ENCODE measurements at regions of chr1 and their contacts with region 1.

Region 1: DNA sequence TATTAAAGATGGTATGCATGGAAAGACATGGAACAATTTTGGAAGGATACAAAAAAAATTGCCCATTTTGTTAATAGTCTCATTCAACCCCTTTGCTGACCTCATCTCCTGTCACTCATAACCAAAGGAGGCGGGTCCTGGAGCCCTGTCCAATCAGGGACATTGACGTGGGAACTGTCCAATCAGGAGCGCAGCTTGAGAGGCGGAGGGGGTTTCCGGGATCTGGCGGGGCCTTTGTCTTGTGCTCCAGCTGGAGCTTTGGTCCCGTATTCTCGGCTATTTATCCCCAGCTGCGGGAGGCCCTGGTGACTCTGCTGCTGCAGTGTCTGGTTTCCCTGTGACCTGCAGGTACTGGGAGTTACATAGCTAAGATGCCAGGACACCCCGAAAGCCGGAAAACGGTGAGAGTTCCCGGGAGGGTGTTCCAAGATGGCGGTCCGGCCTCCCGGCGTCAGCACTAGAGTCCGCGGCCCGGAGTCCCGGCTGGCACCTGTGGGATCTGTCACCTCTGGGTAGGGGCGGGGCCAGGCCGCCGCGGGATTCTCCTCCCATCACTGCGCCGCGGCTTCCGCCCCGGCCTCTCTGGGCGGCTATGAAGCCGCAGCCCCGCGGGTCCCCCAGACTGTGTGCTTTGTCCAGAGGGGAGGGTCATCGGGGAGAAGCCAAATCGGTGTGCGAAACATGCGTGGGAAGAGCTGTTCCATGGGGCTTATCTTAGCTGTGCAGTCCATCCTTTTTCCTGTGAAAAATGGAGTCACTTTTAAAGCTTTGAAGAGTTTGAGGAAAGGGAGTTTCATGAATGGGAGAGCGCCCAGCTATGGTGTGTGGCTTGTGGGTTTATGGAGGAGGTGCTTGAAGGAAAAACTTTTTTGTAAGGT is at the start of gene ZNF678:
- DNase-seq: peak; percentile 97
- H3K4me3 ChIP-seq: peak within 1 kb of the TSS; percentile 65
- H3K27ac ChIP-seq: peak within 1 kb of the TSS; percentile 89
- H3K4me1 ChIP-seq: no peaks in the 10 kb centered on the region
- H3K27me3 ChIP-seq: no peaks in the 10 kb centered on the region
- CTCF ChIP-seq: no peak
- total RNA-seq, gene ZNF678: 10.2 and 10.9 TPM in 2 replicates

Region 2: GRCh38 chr1:227542143-227543120 is 21.1 kb before region 1 on chr1:
- CTCF ChIA-PET with region 1: interaction called, 10 read pairs
- POLR2A ChIA-PET with region 1: no interaction called
- intact Hi-C with region 1: no loop called
- DNase-seq: peak; percentile 93
- H3K4me3 ChIP-seq: peak overlapping the region; percentile 50
- H3K27ac ChIP-seq: peak overlapping the region; percentile 61
- H3K4me1 ChIP-seq: peaks cover 4% of the 10 kb centered on the region
- H3K27me3 ChIP-seq: no peaks in the 10 kb centered on the region
- CTCF ChIP-seq: peak; percentile 77

Measured in A673 (cell line).